ENCODE measurements at regions of chr17 and their contacts with region 1.

Region 1: GRCh38 chr17:17356149-17356930 is 53.2 kb downstream of the NT5M start:
- DNase-seq: peak; percentile 81
- H3K4me3 Mint-ChIP-seq: no peak overlapping the region
- H3K27ac Mint-ChIP-seq: no peak overlapping the region
- H3K4me1 Mint-ChIP-seq: peaks cover 2% of the 10 kb centered on the region
- H3K27me3 Mint-ChIP-seq: peaks cover 32% of the 10 kb centered on the region

Region 2: DNA sequence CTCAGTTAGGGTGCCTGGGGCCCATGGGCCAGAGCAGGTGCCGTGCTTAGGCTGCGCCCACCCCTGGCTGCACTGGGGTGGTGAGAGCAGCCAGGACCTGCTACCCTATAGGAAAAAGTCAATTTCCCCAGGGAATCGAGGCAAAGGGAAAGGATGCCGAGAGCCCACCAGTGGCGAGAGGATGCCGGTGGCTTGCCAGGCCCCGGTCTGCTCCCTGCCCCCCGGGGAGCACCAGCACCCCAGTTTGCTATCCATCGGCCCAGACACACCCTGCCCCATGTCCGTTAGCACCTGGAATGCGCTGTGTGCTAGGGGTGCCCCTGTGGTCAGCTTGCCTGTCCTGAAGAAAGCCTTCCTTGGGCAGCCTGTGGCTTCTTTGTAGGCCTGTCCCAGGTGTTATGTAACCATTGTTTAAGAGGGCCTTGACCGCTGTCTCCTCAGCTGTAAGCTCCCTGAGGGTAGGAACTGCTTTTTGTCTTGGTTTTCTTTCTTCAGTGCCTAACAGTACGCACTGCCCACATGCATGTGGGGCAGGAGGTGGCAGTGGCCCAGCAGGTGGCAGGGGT is 12.4 kb before region 1 on chr17:
- CTCF ChIA-PET with region 1: no interaction called
- DNase-seq: no peak
- H3K4me3 Mint-ChIP-seq: no peak overlapping the region
- H3K27ac Mint-ChIP-seq: no peak overlapping the region
- H3K4me1 Mint-ChIP-seq: no peaks in the 10 kb centered on the region
- H3K27me3 Mint-ChIP-seq: no peaks in the 10 kb centered on the region

Region 3: DNA sequence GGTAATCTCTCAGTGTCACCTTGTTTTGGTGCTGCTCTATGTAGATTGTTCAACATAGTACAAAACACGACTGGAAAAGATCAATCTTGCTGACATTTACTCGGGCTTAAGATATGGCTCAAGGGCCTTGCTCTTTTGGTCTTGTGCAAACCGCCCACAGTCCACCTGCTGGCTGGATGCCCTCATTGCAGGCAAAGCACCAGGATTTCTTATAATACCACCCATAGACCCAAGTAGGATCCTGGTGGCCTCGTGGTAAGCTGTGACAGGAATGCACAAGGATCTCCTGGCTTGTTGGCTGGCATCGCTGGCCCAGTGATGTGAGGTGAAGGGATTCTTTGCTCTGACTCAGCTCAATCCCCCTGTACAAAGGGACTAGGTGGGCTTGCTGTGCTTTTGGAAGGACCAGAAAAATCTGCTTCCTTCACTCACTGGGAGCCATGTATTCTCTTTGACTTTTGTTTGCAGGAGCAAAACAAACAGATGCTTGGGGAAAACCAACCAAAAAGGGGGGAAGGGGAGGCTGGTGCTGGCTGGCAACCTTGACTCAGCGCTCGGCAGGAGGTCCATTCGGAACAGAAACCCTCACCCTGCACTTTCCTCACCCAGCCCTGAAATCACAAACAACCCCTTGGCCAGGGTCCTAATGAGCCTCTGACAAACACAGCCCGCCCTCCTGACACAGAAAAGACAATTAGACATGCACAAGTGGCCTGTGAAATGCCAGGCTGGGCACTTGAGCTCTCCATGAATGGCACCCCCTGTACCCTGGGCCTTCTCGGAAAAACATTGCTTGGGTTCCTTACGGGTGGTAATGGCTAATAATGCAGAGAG is 83.9 kb after region 1 on chr17:
- CTCF ChIA-PET with region 1: interaction called, 14 read pairs
- DNase-seq: peak; percentile 83
- H3K4me3 Mint-ChIP-seq: no peak overlapping the region
- H3K27ac Mint-ChIP-seq: no peak overlapping the region
- H3K4me1 Mint-ChIP-seq: peaks cover 4% of the 10 kb centered on the region
- H3K27me3 Mint-ChIP-seq: peaks cover 16% of the 10 kb centered on the region

Region 4: DNA sequence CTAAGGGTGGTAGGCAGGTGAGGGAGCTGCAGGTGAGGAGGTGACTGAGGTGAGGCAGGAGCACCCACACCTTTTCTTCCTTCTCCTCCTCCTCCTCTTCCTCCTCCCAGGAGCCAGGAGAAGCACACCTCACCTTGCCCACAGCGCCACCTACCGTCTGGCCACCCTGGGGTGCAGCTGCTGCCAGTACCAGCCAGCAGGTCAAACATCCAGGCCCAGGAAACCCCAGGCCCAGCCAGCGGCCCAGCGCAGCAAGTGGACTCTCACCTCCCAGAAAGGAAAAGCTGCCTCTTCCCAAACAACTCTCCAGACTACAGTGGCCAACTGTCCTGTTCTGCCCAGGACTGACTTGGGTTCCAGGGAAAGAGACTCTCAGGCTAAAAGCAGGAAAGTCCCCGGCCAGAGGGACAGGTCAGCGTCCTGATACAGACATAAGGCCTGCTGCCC is 212.4 kb after region 1 on chr17:
- CTCF ChIA-PET with region 1: interaction called, 15 read pairs
- DNase-seq: peak; percentile 78
- H3K4me3 Mint-ChIP-seq: no peak overlapping the region
- H3K27ac Mint-ChIP-seq: no peak overlapping the region
- H3K4me1 Mint-ChIP-seq: no peaks in the 10 kb centered on the region
- H3K27me3 Mint-ChIP-seq: no peaks in the 10 kb centered on the region

Region 5: DNA sequence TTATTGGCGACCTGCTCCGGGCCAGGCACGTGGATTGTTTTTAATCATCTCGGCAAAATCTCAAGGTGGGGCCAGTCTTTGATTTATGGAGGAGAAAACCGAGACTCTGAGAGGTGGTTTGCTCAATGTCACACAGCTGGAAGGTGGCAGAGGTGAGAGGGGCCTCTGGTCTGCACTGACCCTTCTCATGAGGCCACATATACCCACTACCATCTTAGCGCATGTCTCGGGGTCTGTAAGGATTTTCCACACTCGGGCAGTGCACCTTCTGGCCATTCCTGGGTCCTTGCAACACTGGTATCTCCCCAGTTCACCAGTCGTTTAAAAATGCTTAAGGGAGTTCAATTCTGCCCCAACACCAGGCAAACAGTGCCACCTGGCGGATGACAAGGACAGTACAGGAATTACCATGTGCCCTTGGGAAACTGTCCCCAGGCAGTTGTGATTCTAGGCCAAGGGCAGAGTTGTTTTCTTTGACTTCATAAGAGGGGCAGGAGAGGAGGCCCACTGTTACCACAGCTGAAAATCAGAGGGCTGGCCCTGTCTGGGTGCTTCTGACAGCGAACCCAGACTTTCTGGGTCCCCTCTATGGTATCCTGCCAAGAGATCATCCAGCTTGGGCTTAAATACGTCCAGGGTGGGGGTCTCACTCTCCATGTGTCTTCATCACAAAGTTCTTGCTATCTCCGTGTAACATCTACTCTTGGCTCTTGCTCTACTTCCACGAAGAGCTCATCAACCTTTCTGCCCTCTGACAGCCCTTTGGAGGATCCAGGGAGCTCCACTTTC is 285.5 kb after region 1 on chr17:
- CTCF ChIA-PET with region 1: interaction called, 67 read pairs
- DNase-seq: peak; percentile 86
- H3K4me3 Mint-ChIP-seq: no peak overlapping the region
- H3K27ac Mint-ChIP-seq: no peak overlapping the region
- H3K4me1 Mint-ChIP-seq: peaks cover 2% of the 10 kb centered on the region
- H3K27me3 Mint-ChIP-seq: peaks cover 42% of the 10 kb centered on the region

Measured in activated naive CD4-positive, alpha-beta T cell treated with anti-CD3 and anti-CD28 coated beads, Interleukin-2, amount 10 ng/mL, durations not matched to agents 7 days and 5 days (primary cell).